Esophagus muscularis mucosa (tissue), 4 donors: ENCODE measurements at regions of chr16 and their contacts with region 1.

Region 1: DNA sequence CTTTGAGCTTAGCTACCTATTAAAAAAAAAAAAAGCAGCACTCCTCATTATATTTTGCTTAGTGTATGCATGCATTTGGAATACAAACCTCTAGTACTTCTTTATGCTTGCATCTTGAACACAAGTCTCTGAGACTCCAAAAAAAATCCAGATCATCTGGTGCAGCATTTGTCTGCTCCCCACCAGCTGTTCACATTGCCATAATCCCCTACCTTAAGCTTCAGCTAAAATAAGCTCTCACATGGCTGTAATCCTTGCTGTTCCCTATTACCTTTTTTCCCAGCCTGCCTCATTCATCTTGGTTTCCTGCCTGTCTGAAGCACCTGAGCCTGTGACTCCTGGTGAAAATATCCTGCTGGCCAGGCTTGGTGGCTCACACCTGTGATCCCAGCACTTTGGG is 7.5 kb upstream of the NFATC2IP start:
- DNase-seq: no peak
- H3K4me3 ChIP-seq: no peak overlapping the region
- H3K27ac ChIP-seq: no peak overlapping the region
- H3K4me1 ChIP-seq: peaks cover 4 to 13% (median 12%) of the 10 kb centered on the region in 4 donors
- H3K27me3 ChIP-seq: peaks cover 0 to 5% (median 0%) of the 10 kb centered on the region in 4 donors
- CTCF ChIP-seq: no peak
- EP300 ChIP-seq: no peak
- POLR2A ChIP-seq: no peak

Region 2: GRCh38 chr16:28823872-28824716 is 119.2 kb before region 1 on chr16:
- intact Hi-C with region 1: loop called (anchors 5 kb)
- DNase-seq: peak; percentile 99
- H3K4me3 ChIP-seq: peak overlapping the region; percentile 94 to 100 (median 99)
- H3K27ac ChIP-seq: peak overlapping the region; percentile 99 to 100 (median 100)
- H3K4me1 ChIP-seq: peaks cover 23 to 42% (median 30%) of the 10 kb centered on the region in 4 donors
- H3K27me3 ChIP-seq: no peaks in the 10 kb centered on the region
- CTCF ChIP-seq: peak; percentile 24 to 38 (median 28)
- EP300 ChIP-seq: no peak
- POLR2A ChIP-seq: peak; percentile 42

Region 3: DNA sequence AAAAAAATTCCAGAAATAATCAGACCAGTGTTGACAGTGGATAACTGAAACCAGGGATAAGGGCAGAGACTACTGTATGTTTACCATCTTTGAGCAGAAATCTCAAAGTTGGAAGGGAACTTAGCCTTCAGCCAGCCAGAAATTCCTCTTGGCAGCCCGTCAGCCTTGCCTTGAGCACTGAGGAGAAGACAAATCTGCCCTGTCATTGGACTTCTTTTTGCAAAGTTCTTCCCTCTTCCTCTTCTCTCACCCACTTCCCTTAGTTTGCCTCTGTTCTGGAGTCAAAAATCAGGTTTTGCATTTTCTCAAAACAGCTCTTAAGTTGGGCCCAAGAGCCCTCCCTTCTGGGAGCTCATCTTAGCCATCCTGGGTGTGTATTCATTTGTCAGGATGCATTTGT is 103.4 kb before region 1 on chr16:
- intact Hi-C with region 1: loop called (anchors 5 kb)
- DNase-seq: no peak
- H3K4me3 ChIP-seq: no peak overlapping the region
- H3K27ac ChIP-seq: peak overlapping the region in 1 of 4 donors; percentile 46
- H3K4me1 ChIP-seq: peaks cover 3 to 17% (median 10%) of the 10 kb centered on the region in 4 donors
- H3K27me3 ChIP-seq: no peaks in the 10 kb centered on the region
- CTCF ChIP-seq: no peak
- EP300 ChIP-seq: no peak
- POLR2A ChIP-seq: no peak

Region 4: GRCh38 chr16:28879841-28880588 is 63.3 kb before region 1 on chr16:
- intact Hi-C with region 1: loop called (anchors 5 kb)
- DNase-seq: peak; percentile 97
- H3K4me3 ChIP-seq: peak overlapping the region; percentile 60 to 85 (median 68)
- H3K27ac ChIP-seq: peak overlapping the region in 3 of 4 donors; percentile 17 to 52 (median 47)
- H3K4me1 ChIP-seq: peaks cover 14 to 29% (median 19%) of the 10 kb centered on the region in 4 donors
- H3K27me3 ChIP-seq: peaks cover 0 to 38% (median 4%) of the 10 kb centered on the region in 4 donors
- CTCF ChIP-seq: peak; percentile 11 to 36 (median 21)
- EP300 ChIP-seq: no peak
- POLR2A ChIP-seq: no peak